Dorsolateral prefrontal cortex (tissue), 120 donors: ENCODE measurements at regions of chr22 and their contacts with region 1.

Region 1: DNA sequence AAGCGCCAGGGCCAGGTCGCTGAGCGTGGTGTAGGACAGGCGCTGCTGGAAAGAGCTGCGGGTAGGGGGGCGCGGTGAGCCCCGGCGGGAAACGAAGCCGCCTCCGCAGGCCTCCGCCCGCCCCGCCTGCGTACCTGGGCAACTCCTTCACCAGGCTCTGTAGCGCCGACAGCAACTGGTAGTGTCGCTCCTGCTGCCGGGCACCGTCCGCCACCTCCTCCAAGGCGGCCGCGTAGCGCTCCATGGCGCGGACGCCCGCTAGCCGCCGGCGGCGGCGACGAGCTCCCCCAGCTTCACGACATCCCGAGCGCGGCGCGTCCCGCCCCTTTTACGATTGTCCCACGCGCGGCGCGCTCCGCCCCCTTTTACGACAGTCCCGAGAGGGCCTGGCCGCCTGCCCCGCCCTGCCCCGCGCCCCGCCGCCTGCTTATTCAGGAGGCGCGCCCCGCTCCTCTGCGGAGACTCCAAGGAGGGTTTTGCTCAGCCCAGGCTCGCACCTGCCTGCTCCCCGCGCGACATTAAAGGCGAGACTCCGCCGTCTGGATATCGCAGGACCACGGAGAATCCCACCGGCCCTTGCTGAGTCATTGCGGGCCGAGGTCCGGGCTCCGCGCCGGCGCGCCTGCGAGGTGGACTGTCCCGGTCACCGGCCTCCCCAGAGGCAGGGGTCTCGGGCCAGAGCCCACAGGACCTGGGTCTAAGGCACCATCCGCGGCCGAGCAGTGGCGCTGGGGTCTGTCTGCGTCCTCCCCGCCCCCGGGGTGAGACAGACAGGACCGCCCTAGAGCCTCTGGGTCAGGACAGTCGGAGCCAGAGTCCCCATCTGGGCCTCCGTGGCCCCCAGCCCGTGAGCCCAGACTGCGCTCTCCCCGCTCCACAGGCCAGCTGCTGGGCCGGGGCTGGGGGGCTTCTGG is at the start of gene DGCR6L:
- DNase-seq: peak; percentile 86 to 95 (median 92)
- H3K4me3 ChIP-seq: peak within 1 kb of the TSS; percentile 66 to 100 (median 97)
- H3K27ac ChIP-seq: peak within 1 kb of the TSS in 58 of 59 donors; percentile 54 to 98 (median 90)
- H3K27me3 ChIP-seq: no peaks in the 10 kb centered on the region
- CTCF ChIP-seq: peak in 41 of 56 donors; percentile 5 to 58 (median 38)
- total RNA-seq, gene DGCR6L: 33.0 to 66.4 (median 49.3) TPM

Region 2: DNA sequence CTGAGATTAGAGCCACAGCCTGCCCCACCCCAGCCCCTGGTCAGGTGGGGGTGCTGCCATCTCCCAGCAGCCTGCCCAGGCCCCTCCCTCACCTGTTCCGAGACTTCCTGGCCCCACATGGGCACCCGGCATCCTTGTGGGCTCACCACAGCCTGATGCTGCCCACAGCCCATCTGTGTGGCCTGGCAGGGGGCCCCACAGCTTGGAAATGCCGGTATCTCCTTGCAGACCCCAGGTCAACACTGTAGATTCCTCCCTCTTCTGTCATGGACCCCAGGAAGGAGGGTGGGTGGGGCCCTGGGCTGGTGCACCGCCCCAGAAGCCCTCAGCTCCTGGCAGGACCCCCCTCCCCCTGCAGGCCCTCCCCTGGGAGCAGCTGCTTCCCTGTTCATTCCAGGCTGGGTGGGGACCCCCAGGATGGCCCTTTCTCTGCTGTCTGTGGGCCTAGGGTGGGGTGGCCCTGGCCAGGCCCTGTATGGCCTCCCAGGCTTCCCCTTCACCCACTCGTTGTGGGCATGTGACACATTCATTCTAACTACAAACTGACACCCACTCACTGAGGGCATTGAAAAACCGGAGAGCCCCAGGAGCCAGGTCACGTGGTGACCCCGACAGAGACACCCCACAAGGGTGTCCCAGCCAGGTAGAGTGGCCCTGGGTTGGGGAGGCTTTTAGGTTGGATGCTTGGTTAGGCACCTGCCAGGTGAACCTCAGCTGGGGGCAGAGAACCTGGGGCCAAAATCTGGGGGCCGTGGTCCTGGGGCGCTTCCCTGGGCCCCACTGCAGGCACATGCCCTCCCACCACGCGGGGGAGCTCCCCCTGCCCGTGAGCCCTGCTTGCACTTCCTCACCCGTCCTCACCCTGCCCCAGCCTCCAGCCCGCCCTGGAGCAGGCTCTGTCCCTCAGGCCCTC is 125.1 kb before region 1 on chr22:
- intact Hi-C with region 1: no loop called
- DNase-seq: no peak
- H3K4me3 ChIP-seq: no peak overlapping the region
- H3K27ac ChIP-seq: no peak overlapping the region
- H3K27me3 ChIP-seq: no peaks in the 10 kb centered on the region
- CTCF ChIP-seq: no peak

Region 3: DNA sequence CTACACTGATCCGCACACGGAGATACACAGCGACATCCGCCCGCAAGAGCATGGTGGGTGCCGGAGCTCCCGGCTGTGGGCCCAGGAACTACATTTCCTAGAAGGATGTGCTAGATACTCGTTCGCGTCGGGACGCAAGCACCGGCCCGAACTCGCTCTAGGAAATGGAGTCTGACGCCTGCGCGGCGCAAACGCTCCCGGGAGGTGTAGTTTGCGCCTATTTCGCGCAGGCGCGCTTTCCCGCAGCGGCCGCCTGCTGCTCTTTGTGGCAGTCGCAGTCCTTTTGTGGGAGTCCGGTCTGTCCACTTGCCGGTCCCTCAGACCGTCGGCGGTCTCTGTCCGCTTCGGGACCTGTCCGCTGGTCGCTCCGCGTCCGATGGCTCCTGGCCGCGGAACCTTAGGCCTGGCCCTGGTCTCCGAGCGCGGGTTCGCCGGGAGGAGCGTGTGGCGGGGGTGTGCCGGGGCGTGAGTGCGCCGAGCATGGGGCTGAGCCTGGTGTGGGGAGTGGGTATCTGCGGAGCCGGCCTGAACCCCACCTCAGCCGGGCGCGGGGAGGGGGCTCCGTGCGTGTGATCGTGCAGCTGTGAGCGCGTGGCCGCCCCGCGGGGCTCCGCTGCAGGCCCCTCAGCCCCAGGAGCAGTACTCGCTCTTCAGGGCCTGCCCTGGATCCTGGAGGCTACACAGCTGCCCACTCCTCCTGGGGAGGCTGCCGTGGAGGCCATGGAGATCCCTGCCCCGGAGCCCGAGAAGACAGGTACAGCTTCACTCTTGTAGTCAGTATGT is 74.1 kb after region 1 on chr22 and contains the start of gene ZNF74:
- intact Hi-C with region 1: loop called (anchors 5 to 10 kb)
- DNase-seq: peak; percentile 80 to 96 (median 90)
- H3K4me3 ChIP-seq: peak within 1 kb of the TSS; percentile 63 to 97 (median 87)
- H3K27ac ChIP-seq: peak within 1 kb of the TSS; percentile 5 to 91 (median 81)
- H3K27me3 ChIP-seq: no peaks in the 10 kb centered on the region
- CTCF ChIP-seq: peak in 46 of 56 donors; percentile 3 to 61 (median 36)
- total RNA-seq, gene ZNF74: 11.3 to 30.5 (median 20.4) TPM

Region 4: DNA sequence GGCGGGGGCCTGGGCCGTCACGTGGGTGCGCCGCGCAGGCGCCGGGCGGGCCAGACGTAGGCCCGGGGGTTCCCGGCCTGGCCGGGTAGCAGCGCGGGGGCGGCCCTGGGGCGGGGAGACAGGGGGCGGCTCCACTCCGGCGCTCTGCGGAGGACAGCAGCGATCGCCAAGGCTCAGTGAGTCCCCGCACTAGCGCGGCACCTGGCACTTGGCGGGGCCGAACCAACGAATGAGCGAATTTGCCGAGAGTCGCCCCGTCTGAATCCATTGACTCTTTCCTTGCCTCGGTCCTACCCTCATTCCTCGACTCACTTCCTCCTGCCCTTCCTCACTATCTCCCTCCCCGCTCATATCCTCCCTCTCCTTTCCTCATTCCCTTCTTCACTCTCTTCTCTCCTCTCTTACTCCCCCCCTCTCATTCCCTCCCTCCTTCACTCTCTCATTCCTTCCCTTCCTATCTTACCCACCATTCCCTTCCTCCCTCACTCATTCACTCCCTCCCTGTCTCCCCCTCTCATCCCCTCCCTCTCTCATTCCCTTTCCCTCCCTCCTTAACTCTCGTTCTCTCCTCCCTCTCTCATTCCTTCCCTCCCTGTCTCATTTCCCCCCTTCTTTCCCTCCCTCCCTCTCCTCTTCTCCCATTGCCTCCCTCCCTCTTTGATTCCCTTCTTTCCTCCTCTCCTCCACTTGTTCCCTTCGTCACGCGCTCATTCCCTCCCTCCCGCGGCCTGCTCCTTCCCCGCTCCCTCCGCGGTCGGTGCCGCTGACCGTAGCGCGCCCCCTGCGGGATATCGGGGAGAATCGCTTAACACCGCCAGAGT is 176.1 kb after region 1 on chr22:
- intact Hi-C with region 1: loop called in 1 of 2 experiments (anchors 10 kb)
- DNase-seq: peak; percentile 77 to 97 (median 90)
- H3K4me3 ChIP-seq: peak overlapping the region; percentile 62 to 93 (median 83)
- H3K27ac ChIP-seq: peak overlapping the region; percentile 84 to 99 (median 97)
- H3K27me3 ChIP-seq: no peaks in the 10 kb centered on the region
- CTCF ChIP-seq: peak; percentile 69 to 95 (median 87)